ENCODE measurements at regions of chr1 and their contacts with region 1.

Region 1: DNA sequence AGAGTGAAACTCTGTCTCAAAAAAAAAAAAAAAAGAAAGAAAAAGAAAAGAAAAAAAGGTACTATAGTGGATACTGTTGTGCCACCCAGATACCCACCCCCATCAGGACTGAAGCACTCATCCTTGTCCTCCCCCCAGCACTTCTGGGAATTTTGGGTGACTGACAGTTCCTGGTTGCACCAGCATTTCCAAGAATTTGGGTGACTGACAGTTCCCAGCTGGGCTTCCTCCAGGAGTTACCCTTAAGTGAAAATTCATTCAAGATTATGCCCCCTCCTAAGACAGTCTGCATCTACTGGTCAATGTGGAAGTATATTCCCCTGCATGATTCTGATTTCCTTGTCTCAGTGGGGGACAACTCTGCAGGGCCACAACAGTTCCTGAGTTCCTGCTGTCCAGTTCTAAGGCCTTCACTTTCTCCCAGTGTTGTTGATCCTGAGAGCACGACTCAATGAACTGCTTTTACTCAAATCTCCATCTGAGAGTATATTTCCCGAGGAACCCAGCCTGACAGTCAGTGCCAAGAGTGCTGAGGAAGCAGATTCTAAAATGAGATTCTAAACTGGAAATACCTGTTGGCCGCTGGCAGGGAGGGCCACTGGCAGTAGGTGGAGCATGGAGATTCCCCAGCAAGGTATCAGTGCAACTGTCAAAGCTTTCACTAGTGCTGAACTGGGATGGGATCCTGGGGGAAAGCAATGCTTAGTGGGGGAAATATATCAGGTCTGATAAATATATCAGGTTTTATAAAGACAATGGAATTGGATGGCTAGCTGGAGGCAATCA is 18.5 kb downstream of the RIIAD1 start:
- DNase-seq: peak; percentile 29 to 56 (median 49)
- ATAC-seq: peak; percentile 58
- H3K4me3 ChIP-seq: no peak overlapping the region
- H3K27ac ChIP-seq: peak overlapping the region in 3 of 4 donors; percentile 10 to 48 (median 26)
- H3K4me1 ChIP-seq: peaks cover 12% of the 10 kb centered on the region
- H3K27me3 ChIP-seq: no peaks in the 10 kb centered on the region
- CTCF ChIP-seq: peak in 2 of 7 experiments; percentile 4 to 10
- POLR2A ChIP-seq: no peak

Region 2: DNA sequence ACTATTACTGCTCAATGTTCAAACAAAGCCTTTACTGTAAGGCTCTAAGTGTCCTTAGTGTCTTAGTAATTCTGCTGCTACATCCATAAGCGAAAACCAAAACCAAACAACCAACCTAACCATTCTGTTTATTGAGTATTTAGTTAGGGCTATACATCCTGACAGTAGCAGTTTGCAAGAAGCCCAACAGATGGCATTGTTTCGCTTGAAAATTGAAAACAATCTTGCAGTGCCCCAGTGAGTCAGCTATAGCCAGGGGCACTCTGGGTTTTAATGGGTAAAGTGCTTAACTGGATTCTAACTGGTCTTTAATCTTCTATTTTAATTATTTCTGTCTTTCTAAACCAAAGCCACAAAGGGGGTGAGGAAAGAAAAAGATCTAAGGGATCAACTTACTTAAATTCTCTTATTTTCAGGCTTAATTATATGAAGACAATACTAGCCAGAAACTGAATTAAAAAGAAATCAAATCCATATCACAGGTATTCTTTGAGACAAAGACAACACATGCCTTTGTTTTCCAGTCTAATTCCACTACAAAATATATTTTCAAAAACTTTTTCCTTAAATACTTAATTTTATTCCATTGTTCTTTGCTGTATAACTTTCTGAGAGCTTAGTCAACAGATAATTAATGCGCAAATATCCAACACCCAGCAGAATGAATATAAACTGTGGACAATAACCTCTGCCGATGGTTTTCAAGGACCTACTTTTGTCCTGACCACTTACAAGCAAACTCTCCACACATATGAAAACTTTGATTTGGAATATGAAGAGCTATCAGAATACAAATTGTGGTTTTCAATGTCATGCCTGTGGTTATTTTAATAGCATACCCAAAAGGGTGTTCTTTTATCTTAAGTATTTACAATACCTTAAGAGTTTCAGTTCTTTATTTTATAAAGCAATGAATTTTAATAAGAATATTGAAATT is 295.7 kb before region 1 on chr1:
- intact Hi-C with region 1: loop called (anchors 10 kb)
- DNase-seq: peak; percentile 68 to 78 (median 74)
- ATAC-seq: peak; percentile 86
- H3K4me3 ChIP-seq: no peak overlapping the region
- H3K27ac ChIP-seq: no peak overlapping the region
- H3K4me1 ChIP-seq: peaks cover 5% of the 10 kb centered on the region
- H3K27me3 ChIP-seq: no peaks in the 10 kb centered on the region
- CTCF ChIP-seq: peak in 6 of 7 experiments; percentile 42 to 75 (median 72)
- POLR2A ChIP-seq: no peak

Region 3: DNA sequence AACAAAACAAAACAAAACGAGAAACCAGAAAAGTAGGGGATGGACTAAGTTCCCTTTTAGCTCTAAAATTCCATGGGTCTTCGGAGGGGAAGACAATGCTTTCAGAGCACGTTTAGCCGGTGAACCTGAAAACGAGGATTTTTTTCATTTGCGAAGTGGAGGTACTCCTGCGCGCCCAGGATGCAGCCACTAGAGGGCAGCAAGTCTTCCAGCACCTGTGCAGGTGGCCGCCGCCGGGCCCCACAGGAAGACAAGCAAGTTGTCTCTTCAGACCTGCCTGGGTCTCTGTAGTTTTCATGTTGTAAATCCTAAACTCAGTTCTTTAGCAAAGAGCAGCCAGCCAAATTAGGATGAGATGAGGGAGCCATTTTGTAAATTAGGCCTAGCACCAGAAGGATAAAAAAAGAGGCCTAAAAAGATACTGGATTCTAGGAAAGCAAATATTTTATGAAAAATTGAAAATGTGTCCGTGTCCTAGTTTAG is 145.6 kb before region 1 on chr1:
- intact Hi-C with region 1: loop called (anchors 10 kb)
- DNase-seq: peak; percentile 89 to 95 (median 90)
- ATAC-seq: peak; percentile 92
- H3K4me3 ChIP-seq: no peak overlapping the region
- H3K27ac ChIP-seq: peak overlapping the region in 1 of 4 donors; percentile 11
- H3K4me1 ChIP-seq: peaks cover 10% of the 10 kb centered on the region
- H3K27me3 ChIP-seq: no peaks in the 10 kb centered on the region
- CTCF ChIP-seq: peak; percentile 62 to 92 (median 88)
- POLR2A ChIP-seq: no peak

Measured in body of pancreas (tissue), 4 donors.